ENCODE measurements at regions of chr15 and their contacts with region 1.

Region 1: DNA sequence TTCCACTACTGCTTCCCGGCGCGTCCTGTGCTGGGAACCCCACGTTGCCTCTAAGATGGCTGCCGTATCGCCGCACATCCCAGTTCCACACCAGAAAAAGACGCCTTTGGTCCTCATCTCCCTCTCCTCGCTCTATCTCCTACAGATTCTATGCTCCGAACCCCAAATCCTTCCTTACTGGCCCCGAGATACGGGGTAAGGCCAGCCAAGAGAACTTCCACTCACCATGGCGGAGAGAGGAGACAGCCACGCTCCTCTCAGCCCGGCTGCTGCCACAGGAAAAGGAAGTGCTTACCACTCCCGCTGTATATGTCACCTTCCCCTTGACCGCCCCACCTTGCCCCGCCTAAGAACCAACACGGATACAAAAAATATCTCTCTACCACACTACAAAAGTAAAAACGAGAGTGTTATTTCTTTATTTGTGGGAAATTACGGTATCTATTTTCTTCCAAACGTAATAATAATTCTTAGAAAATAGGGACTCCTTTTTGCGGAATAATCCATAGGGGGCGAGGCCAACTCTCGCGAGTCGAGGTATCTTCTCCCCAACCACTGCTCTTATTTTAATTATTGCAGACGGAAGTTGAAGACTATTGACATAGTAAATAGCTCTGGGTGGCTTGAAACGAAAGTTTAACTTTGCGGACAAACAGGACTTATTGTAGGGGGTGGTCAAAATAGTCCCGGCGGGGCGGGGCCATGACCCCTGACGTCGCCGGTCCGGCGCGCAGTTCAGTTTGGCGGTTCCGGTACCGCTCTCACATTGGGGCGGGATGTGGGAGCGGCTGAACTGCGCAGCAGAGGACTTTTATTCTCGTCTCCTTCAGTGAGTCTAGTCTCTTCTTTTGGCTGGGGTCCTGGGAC is at the starts of genes RPL4 and ZWILCH:
- DNase-seq: peak; percentile 85
- ATAC-seq: peak; percentile 89
- H3K4me3 Mint-ChIP-seq: peak within 1 kb of the TSS; percentile 88
- H3K27ac Mint-ChIP-seq: peak within 1 kb of the TSS; percentile 98
- H3K4me1 Mint-ChIP-seq: peaks cover 56% of the 10 kb centered on the region
- H3K27me3 Mint-ChIP-seq: no peaks in the 10 kb centered on the region
- total RNA-seq, gene RPL4: 4,227 to 4,959 TPM
- total RNA-seq, gene ZWILCH: 27.4 to 31.1 TPM

Region 2: DNA sequence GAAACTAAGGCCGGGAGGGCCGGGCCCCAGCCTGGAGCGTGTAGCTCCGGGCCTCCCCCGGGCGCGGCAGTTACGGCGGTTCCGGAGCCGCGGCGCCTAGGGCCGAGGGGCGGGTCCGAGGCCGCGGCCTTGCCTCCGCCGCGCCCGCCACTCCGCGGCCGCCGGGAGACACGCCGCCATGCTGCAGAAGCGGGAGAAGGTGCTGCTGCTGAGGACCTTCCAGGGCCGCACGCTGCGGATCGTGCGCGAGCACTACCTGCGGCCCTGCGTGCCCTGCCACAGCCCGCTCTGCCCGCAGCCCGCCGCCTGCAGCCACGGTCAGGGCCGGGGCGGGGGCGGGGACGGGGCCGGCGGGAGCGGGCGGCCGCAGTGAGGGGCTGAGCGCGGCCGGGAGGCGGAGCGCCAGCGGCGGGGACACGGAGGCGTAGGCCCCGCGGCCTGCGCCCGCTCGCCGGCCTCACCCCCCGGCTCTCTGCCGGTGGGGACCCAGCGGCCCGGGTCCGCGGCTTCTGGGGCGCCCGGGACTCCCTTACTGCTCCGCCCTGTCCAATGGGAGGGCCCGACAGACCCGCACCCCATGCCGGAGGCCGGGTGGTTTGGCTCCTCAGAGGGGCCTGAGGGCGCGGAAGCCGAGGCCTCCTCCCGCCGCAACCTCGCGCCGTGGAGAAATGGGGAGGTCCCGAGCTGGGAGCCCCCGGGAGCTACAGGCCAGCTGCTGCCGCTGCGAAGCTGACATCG is 211.2 kb before region 1 on chr15 and contains the start of gene DIS3L:
- CTCF ChIA-PET with region 1: no interaction called
- POLR2A ChIA-PET with region 1: no interaction called
- intact Hi-C with region 1: loop called (anchors 1 to 2 kb)
- DNase-seq: peak; percentile 75
- ATAC-seq: peak; percentile 80
- H3K4me3 Mint-ChIP-seq: peak within 1 kb of the TSS; percentile 86
- H3K27ac Mint-ChIP-seq: peak within 1 kb of the TSS; percentile 90
- H3K4me1 Mint-ChIP-seq: peaks cover 49% of the 10 kb centered on the region
- H3K27me3 Mint-ChIP-seq: no peaks in the 10 kb centered on the region
- total RNA-seq, gene DIS3L: 24.6 to 25.9 TPM

Region 3: DNA sequence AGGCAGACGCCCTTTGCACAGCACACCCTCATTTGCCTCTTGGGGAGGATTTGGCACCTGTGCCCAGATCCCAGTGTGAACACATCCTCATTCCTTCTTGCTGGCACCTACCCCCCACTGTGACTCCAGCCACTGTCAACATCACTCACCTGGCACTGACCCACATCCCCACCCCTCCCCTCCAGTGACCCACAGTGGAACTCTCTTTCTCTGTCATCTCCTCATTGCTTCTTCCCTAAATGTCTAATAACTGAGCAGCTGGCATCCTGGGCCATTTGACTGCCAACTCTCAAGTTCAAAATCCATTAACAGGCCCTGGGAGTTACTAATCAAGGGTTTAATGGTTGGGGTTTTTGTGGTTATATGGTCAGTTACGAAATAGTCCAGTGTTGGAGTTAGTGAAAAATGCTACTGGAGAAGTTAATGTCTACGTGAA is 21.6 kb before region 1 on chr15:
- CTCF ChIA-PET with region 1: no interaction called
- POLR2A ChIA-PET with region 1: no interaction called
- intact Hi-C with region 1: no loop called
- DNase-seq: no peak
- ATAC-seq: no peak
- H3K4me3 Mint-ChIP-seq: no peak overlapping the region
- H3K27ac Mint-ChIP-seq: no peak overlapping the region
- H3K4me1 Mint-ChIP-seq: no peaks in the 10 kb centered on the region
- H3K27me3 Mint-ChIP-seq: no peaks in the 10 kb centered on the region

Region 4: GRCh38 chr15:67025719-67026609 is 521.2 kb after region 1 on chr15:
- CTCF ChIA-PET with region 1: no interaction called
- POLR2A ChIA-PET with region 1: no interaction called
- intact Hi-C with region 1: no loop called
- DNase-seq: no peak
- ATAC-seq: no peak
- H3K4me3 Mint-ChIP-seq: no peak overlapping the region
- H3K27ac Mint-ChIP-seq: no peak overlapping the region
- H3K4me1 Mint-ChIP-seq: peaks cover 34% of the 10 kb centered on the region
- H3K27me3 Mint-ChIP-seq: peaks cover 6% of the 10 kb centered on the region

Measured in activated CD4-positive, alpha-beta T cell treated with anti-CD3 and anti-CD28 coated beads for 36 hours (primary cell).